ENCODE measurements at regions of chr15 and their contacts with region 1.

Region 1: DNA sequence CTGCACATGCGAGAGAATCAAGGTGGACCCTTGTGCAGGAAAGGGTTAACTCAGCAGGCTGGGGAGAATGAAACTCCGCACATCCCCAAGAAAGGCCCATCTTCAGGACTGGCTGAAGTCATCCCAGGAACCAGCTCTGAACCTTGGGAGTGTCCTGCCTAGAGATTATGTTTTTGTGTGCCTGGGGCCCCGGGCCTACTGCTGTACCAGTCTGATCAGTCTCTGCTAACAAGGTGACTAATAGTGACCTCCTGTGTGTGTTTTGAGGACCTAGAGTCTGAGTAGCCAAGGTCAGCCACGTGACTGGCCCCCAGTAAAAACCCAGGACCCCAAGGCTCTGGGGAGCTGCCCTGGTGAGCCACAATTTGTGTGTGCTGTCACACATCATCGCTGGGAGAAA is 58.2 kb downstream of the CYFIP1 start:
- DNase-seq: no peak
- ATAC-seq: no peak
- H3K4me3 Mint-ChIP-seq: no peak overlapping the region
- H3K27ac Mint-ChIP-seq: no peak overlapping the region
- H3K4me1 Mint-ChIP-seq: no peaks in the 10 kb centered on the region
- H3K27me3 Mint-ChIP-seq: no peaks in the 10 kb centered on the region

Region 2: DNA sequence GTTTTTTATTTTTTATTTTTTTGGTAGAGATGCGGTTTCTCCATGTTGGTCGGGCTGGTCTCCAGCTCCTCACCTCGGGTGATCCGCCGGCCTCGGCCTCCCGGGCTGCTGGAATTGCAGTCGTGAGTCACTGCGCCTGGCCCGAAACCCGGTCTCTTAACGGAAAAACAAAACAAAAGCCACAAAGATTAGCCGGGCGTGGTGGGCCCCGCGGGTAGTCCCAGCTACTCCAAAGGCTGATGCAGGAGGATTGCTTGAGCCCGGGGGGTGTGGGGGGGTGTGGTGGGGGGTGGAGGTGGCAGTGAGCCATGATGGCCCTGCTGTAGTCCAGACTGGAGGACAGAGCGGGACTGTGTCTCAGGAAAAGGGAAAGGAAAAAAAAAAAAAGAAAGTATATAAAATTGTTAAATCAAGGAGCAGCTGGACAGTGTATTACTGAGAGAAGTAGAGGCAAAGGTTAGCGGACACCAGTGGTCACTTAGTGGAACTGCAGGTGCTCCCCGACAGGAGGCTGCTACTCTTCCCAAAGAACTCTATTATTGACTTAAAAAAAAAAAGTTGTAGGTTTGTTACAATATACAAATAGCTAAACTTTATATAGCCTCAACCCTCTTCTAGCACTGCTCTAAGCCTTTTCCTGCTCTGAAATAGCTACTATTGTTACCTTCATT is 147.6 kb after region 1 on chr15:
- CTCF ChIA-PET with region 1: no interaction called
- POLR2A ChIA-PET with region 1: no interaction called
- intact Hi-C with region 1: loop called in 1 of 2 experiments (anchors 10 kb)
- DNase-seq: no peak
- ATAC-seq: no peak
- H3K4me3 Mint-ChIP-seq: no peak overlapping the region
- H3K27ac Mint-ChIP-seq: no peak overlapping the region
- H3K4me1 Mint-ChIP-seq: no peaks in the 10 kb centered on the region
- H3K27me3 Mint-ChIP-seq: peaks cover 4% of the 10 kb centered on the region

Measured in activated CD4-positive, alpha-beta T cell treated with anti-CD3 and anti-CD28 coated beads for 36 hours (primary cell).